ENCODE measurements at regions of chr21 and their contacts with region 1.

Region 1: DNA sequence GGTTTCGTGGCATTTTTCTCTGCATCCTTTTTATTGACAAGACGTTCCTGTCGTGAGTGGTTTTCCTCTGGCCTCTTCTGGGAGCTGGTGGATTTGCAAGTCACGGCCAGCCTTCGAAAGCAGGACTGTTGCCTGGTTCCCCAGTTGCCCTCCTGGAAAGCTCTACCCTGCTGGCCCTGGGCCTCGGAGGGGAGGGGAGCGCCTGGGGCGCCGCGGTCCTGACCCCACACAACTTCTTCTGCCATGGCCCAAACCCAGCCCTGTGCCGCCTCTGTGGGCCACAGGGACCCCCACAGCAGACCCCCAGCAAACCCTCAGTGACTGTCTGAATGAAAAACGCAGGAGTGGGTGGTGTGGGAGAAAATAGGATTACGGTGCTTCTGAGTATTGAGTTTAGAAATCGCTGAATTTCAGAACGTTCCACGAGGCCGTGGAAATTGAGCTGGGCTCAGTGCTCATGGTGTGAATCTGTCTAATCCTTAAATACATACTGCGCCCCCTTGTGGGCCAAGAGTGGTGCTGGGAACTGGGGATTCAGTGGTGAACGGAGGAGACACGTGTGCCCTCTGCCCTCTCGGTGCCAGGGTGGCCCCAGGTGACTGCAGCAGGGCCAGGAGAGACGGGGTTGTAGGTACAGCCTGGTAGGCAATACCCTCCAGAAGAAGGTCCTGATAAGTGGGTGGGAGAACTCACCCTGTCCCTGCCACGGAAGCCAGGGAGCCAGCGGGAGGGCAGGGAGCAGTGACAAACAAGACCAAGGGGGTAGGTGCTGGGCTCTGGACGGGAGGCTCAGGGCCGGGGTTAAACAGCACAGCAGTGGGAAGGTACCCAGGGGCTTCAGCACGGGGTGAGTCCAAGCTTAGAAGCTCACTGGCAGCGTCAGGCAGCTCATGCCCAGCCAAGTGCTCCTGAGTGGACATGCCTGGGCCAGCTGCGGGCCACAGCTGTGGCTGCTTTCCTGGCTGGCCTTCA is 101.2 kb upstream of the COL6A1 start:
- H3K4me3 ChIP-seq: no peak overlapping the region
- H3K27ac ChIP-seq: no peak overlapping the region
- H3K4me1 ChIP-seq: no peaks in the 10 kb centered on the region; the same call in 1 of the 2 replicates
- CTCF ChIP-seq: 0 out of 2 replicates have a peak, but pooled peaks have one; percentile 20

Region 2: GRCh38 chr21:45846373-45847160 is 33.8 kb before region 1 on chr21:
- CTCF ChIA-PET with region 1: interaction called, 21 read pairs
- POLR2A ChIA-PET with region 1: no interaction called
- H3K4me3 ChIP-seq: no peak overlapping the region
- H3K27ac ChIP-seq: no peak overlapping the region
- H3K4me1 ChIP-seq: no peaks in the 10 kb centered on the region
- CTCF ChIP-seq: no peak

Region 3: DNA sequence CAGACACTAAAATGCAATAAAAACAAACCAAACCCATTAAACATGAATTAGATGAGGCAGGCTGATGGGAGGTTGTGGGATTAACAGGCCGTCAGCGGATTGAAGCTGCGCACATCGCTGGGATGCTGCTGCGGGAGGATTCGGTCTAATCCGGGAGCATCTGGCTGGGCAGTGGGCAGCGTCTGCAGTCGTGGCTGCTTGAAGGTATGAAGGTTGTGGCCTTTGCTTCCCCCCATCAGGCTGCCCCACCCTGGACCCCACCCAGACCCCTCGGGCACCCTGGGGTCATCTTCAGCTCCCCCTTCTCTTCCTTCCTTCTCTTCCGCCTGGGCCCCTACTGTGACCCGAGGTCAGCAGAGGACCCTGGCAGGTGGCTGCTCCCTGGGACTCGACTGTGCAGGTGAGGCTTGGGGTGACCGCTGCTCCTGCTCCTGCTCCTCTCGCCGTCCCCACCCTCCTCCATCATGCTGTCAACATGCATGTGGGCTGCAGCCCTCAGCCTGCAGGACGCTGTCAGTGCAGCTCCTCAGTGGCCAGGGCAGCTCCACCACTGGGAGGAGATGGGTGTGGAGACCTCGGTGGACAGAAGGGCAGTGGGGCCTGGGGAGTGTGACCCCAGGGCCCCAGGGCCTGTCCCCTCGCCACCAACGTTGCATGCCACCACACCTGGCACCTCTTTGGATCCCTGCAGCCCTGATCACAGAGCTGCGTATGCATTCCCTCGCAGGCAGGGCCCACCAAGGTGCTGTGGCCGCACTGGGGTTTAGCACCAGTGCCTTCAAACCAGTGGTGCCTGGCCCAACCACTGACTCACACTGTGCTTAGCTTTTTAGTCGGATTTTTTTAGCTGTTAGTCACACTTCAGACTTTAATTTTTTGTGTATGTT is 11.0 kb before region 1 on chr21:
- CTCF ChIA-PET with region 1: interaction called, 12 read pairs
- POLR2A ChIA-PET with region 1: no interaction called
- H3K4me3 ChIP-seq: no peak overlapping the region
- H3K27ac ChIP-seq: no peak overlapping the region
- H3K4me1 ChIP-seq: no peaks in the 10 kb centered on the region
- CTCF ChIP-seq: no peak

Region 4: DNA sequence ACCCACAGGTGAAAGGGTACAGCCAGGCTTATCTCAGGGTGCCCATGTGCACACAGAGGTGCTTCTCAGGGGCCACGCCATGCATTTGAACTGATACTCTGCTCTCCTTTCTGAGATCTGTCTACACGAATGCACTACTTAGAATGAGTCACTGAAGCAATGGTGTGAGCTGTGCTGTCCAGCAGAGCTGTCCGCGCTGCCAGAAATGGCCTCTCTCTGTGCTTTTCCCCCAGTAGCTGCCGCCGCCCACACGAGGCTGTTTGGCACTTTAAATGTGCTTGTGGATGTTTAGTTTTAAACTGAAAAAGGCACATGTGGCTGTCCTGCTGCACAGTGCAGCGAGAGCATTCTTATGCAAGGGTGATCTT is 14.0 kb after region 1 on chr21:
- CTCF ChIA-PET with region 1: interaction called, 24 read pairs
- POLR2A ChIA-PET with region 1: no interaction called
- H3K4me3 ChIP-seq: no peak overlapping the region
- H3K27ac ChIP-seq: no peak overlapping the region
- H3K4me1 ChIP-seq: no peaks in the 10 kb centered on the region
- CTCF ChIP-seq: no peak